IMR-90 (cell line): ENCODE measurements at regions of chr22 and their contacts with region 1.

Region 1: DNA sequence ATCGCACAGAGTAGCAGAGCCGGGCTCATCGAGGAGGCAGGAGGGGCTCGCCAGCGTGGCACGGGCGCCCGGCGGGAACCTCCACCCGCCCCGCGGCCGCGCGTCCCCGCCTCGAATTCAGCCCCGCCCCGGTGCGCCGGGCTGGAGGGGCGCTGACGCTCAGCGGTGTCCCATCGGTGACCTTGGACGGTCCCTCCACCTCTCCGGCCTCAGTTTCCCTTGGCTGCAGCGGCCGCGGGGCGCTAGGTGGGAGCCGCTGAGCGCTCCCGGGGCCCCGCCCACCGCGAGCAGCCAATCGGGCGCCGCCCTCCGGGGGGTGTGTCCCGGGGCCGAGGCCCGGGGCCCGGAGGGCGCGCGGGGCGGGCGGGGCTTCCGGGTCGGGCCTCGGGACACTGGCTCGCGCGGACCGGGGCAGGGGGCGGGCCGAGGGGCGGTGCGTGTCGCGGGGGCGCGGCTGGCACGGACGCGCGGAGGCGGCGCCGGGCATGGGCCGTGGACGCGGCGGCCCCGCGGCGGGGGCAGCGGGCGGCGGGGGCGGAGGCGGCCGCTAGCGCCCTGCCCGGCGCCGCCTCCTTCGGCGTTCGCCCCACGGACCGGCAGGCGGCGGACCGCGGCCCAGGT is at the start of gene PPARA:
- DNase-seq: peak; percentile 60
- ATAC-seq: peak; percentile 94
- H3K4me3 ChIP-seq: peak within 1 kb of the TSS; percentile 85
- H3K27ac ChIP-seq: peak within 1 kb of the TSS; percentile 42; the same call in 1 of the 2 replicates
- H3K4me1 ChIP-seq: peaks cover 3% of the 10 kb centered on the region
- H3K27me3 ChIP-seq: peaks cover 47% of the 10 kb centered on the region
- CTCF ChIP-seq: no peak
- POLR2A ChIP-seq: no peak
- RAD21 ChIP-seq: no peak
- total RNA-seq, gene PPARA: 6.1 and 7.0 TPM in 2 replicates

Region 2: DNA sequence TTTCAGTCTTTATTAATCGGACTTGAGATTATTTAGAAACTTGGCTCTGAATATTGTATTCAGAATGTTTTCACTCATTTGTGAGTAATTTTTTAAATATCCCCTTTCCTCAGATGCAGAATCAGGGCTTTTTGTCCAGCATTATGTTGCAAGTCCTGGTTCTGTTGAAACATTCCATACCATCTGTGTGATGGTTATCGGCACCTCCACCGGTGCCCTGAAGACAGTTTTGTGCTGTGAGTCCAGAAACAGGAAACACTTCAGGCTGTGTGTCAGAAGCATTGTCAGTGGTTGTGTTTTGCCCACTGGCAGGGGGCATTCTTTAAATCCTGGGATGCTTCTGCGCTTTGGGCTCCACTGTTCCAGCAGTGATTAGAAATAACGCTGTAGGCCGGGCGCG is 79.6 kb after region 1 on chr22:
- CTCF ChIA-PET with region 1: interaction called, 5 read pairs
- POLR2A ChIA-PET with region 1: no interaction called
- dilution Hi-C with region 1: no loop called
- in situ Hi-C with region 1: no loop called
- intact Hi-C with region 1: loop called (anchors 2 kb)
- DNase-seq: peak; percentile 43
- ATAC-seq: peak; percentile 75
- H3K4me3 ChIP-seq: no peak overlapping the region
- H3K27ac ChIP-seq: no peak overlapping the region
- H3K4me1 ChIP-seq: peaks cover 3% of the 10 kb centered on the region; the same call in 1 of the 2 replicates
- H3K27me3 ChIP-seq: no peaks in the 10 kb centered on the region
- CTCF ChIP-seq: no peak
- POLR2A ChIP-seq: no peak
- RAD21 ChIP-seq: no peak

Region 3: DNA sequence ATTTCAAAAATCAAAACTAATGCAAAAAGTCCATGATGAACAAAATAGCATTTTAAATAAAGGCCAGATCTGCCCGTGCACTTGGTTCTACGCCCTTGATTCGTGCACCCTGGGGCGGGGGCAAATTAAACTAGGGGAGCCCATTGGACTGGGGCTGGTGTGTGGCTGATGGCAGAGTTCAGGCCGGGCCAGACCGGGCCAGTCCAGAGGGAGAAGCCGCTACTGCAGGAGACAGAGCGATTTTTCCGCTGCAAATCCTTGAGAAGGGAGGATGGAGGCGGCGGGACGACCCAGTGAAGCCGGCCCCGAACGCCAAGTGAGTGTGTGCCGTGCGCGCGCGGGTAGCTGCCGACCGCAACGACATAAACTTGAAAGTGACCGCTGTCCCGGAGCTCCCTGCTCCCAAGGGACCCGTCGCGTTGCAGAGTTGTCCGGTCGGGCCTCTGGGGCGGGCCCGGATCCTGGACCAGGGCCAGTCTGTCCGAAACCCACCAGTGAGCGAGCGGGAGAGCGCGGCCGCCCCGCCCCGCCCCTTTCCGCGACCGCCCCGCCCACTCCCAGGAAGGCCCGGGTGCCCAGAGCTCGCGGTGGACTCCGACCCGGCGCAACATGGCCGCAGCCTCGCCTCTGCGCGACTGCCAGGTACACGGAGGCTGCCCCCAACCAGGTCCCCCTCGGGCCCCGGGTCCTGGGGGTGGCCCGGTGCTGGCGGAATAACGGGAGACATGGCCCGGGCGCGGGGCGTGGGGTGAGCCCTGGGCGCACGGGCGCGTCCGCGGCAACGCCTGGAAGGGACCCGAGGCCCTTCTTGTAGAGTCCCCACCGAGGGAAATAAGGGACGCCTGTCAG is 117.5 kb after region 1 on chr22 and contains the start of gene TTC38:
- CTCF ChIA-PET with region 1: interaction called, 3 read pairs
- POLR2A ChIA-PET with region 1: no interaction called
- dilution Hi-C with region 1: no loop called
- in situ Hi-C with region 1: no loop called
- intact Hi-C with region 1: loop called (anchors 2 kb)
- DNase-seq: peak; percentile 60
- ATAC-seq: peak; percentile 99
- H3K4me3 ChIP-seq: peak within 1 kb of the TSS; percentile 78
- H3K27ac ChIP-seq: peak within 1 kb of the TSS; percentile 64
- H3K4me1 ChIP-seq: peaks cover 10% of the 10 kb centered on the region
- H3K27me3 ChIP-seq: peaks cover 4% of the 10 kb centered on the region; the same call in 1 of the 2 replicates
- CTCF ChIP-seq: no peak
- POLR2A ChIP-seq: peak; percentile 37; the same call in 1 of the 2 replicates
- RAD21 ChIP-seq: no peak; the same call in 1 of the 2 replicates
- total RNA-seq, gene TTC38: 52.3 and 74.2 TPM in 2 replicates

Region 4: DNA sequence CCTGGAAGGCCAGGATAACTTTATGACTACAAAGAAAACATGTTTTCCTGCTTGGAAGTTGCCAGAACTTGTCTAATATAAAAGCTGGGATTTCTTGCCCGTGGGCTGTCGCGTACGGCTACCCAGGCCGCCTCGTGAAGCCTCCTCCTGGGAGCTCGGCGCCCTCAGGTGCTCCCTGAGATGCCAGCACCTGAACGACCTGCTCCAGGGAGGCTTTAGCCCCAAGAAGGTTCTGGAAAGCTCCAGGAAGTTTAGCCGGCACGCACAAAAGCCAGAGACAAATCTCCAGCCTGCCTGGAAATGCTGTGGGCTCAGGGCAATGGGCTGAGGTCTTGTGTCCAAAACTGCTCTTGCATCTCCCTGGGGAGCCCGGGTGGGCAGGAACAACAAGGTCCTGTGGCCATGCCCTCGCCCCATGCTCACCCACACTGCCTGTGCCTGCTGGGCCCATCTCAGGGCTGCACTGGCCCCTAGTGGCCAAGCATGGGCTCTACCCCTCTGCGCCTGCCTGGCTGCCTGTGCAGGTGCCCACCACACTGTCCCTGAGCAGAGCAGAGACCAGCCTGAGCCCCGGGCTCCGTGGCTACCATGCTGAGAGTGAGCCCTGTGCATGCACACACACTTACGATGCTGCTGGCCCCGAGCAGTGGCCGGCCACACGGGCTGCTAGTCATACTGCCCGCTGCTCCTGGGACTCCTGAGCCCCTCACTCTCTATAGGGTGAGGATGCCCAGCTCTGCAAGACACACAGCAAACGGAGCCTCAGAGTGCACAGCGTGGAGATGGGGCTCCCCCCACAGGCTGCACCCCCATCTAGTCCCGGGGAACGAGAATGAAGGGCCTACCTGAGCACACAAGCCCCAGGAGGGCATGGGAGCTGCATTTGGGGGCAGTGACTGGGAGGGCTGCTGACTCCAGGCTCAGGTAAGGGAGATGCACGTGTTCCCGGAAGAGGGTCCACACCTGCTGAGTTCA is 392.2 kb after region 1 on chr22:
- CTCF ChIA-PET with region 1: no interaction called
- POLR2A ChIA-PET with region 1: no interaction called
- dilution Hi-C with region 1: no loop called
- in situ Hi-C with region 1: loop called (anchors 25 kb)
- intact Hi-C with region 1: no loop called
- DNase-seq: peak; percentile 50
- ATAC-seq: peak; percentile 95
- H3K4me3 ChIP-seq: no peak overlapping the region
- H3K27ac ChIP-seq: no peak overlapping the region
- H3K4me1 ChIP-seq: peaks cover 13% of the 10 kb centered on the region
- H3K27me3 ChIP-seq: peaks cover 21% of the 10 kb centered on the region
- CTCF ChIP-seq: peak; percentile 94
- POLR2A ChIP-seq: 0 out of 2 replicates have a peak, but pooled peaks have one; percentile 43
- RAD21 ChIP-seq: peak; percentile 96

Region 5: DNA sequence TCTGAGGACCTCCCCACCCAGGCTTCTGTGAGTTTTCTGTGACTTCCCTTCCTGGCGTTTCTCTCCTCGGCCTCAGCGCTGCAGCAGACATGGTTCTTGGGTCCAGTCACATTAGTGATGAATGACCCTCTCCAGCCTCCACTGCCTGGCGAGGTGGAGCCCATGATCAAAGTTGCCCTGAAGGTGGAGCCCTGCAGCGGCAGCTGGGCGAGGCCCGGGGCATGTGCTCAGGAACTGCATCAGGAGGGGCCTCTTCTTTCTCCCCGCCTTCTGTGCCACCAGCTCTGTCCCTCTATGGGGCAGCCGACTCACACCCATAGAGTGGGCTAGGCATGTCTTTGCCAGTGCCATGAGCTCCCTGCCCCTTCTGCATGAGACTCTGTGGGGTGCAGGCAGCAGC is 1692.0 kb after region 1 on chr22:
- CTCF ChIA-PET with region 1: no interaction called
- POLR2A ChIA-PET with region 1: no interaction called
- dilution Hi-C with region 1: no loop called
- in situ Hi-C with region 1: no loop called
- intact Hi-C with region 1: no loop called
- DNase-seq: no peak
- ATAC-seq: no peak
- H3K4me3 ChIP-seq: no peak overlapping the region
- H3K27ac ChIP-seq: no peak overlapping the region
- H3K4me1 ChIP-seq: no peaks in the 10 kb centered on the region
- H3K27me3 ChIP-seq: no peaks in the 10 kb centered on the region
- CTCF ChIP-seq: no peak
- POLR2A ChIP-seq: no peak
- RAD21 ChIP-seq: no peak